CD8-positive, alpha-beta T cell (primary cell): ENCODE measurements at regions of chr13 and their contacts with region 1.

Region 1: GRCh38 chr13:95624020-95624419 is 20.5 kb downstream of the DZIP1 start:
- DNase-seq: peak in 3 of 9 experiments; percentile 13 to 64 (median 56)
- ATAC-seq: no peak
- H3K4me3 ChIP-seq: no peak overlapping the region
- H3K4me3 Mint-ChIP-seq: no peak overlapping the region
- H3K27ac ChIP-seq: no peak overlapping the region
- H3K27ac Mint-ChIP-seq: no peak overlapping the region
- H3K4me1 ChIP-seq: no peaks in the 10 kb centered on the region
- H3K4me1 Mint-ChIP-seq: no peaks in the 10 kb centered on the region
- H3K27me3 ChIP-seq: no peaks in the 10 kb centered on the region
- H3K27me3 Mint-ChIP-seq: peaks cover 14% of the 10 kb centered on the region
- CTCF ChIP-seq: peak; percentile 58

Region 2: DNA sequence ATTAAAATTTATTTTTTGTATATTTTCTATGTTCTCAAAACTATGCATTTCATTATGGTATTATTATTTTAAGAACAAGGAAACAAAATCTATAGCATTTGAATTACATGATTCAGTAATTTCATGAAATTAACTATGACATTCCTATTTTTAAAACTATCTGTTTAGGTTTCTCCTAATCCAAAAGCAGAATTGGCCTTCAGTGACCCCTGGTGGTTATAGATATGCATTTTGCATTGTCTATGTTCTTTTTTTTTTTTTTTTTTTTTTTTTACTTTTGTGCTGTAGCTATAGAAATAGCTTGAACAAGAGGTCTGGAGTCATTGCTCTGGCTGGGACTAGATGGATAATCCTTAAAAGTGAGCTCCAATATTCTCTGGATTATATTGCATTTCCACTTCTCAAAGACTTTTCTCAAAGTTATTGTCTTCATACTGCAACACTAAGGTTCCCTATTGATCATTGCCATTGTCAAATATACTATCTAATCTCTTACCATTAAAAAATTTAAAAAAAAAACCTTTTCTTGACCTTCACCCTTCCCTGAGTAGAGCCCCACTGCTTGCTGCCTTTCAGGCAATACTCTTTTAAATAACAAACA is 37.1 kb after region 1 on chr13:
- CTCF ChIA-PET with region 1: interaction called, 3 read pairs
- POLR2A ChIA-PET with region 1: no interaction called
- intact Hi-C with region 1: loop called in 1 of 2 experiments (anchors 1 kb)
- DNase-seq: peak in 2 of 9 experiments; percentile 44 to 52
- ATAC-seq: no peak
- H3K4me3 ChIP-seq: no peak overlapping the region
- H3K4me3 Mint-ChIP-seq: no peak overlapping the region
- H3K27ac ChIP-seq: no peak overlapping the region
- H3K27ac Mint-ChIP-seq: no peak overlapping the region
- H3K4me1 ChIP-seq: no peaks in the 10 kb centered on the region
- H3K4me1 Mint-ChIP-seq: no peaks in the 10 kb centered on the region
- H3K27me3 ChIP-seq: no peaks in the 10 kb centered on the region
- H3K27me3 Mint-ChIP-seq: peaks cover 15% of the 10 kb centered on the region
- CTCF ChIP-seq: peak; percentile 56

Region 3: DNA sequence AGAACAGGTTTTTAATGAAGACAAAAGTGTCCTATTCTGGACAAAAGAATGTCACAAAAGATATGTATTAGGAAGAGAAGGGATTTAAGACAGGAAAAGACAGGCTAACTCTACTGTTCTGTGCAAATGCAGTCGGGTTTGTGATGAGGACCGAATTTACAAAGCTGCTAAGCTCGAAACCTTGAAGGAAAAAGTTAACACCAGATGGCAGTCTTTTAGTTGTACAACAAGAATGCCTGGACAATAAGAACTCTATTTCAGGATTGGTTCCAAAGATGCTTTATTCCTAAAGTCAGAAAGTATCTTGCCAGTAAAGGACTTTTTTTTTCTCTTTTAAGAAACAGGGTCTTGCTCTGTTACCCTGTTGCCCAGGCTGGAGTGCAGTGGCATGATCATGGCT is 517.0 kb after region 1 on chr13:
- CTCF ChIA-PET with region 1: no interaction called
- POLR2A ChIA-PET with region 1: no interaction called
- intact Hi-C with region 1: no loop called
- DNase-seq: no peak
- ATAC-seq: no peak
- H3K4me3 ChIP-seq: no peak overlapping the region
- H3K4me3 Mint-ChIP-seq: no peak overlapping the region
- H3K27ac ChIP-seq: no peak overlapping the region
- H3K27ac Mint-ChIP-seq: no peak overlapping the region
- H3K4me1 ChIP-seq: no peaks in the 10 kb centered on the region
- H3K4me1 Mint-ChIP-seq: no peaks in the 10 kb centered on the region
- H3K27me3 ChIP-seq: no peaks in the 10 kb centered on the region
- H3K27me3 Mint-ChIP-seq: no peaks in the 10 kb centered on the region
- CTCF ChIP-seq: no peak

Region 4: GRCh38 chr13:96958286-96958891 is 1334.4 kb after region 1 on chr13:
- CTCF ChIA-PET with region 1: no interaction called
- POLR2A ChIA-PET with region 1: no interaction called
- intact Hi-C with region 1: loop called in 1 of 2 experiments (anchors 5 kb)
- DNase-seq: peak in 1 of 9 experiments; percentile 2
- ATAC-seq: no peak
- H3K4me3 ChIP-seq: no peak overlapping the region
- H3K4me3 Mint-ChIP-seq: no peak overlapping the region
- H3K27ac ChIP-seq: no peak overlapping the region
- H3K27ac Mint-ChIP-seq: no peak overlapping the region
- H3K4me1 ChIP-seq: no peaks in the 10 kb centered on the region
- H3K4me1 Mint-ChIP-seq: no peaks in the 10 kb centered on the region
- H3K27me3 ChIP-seq: no peaks in the 10 kb centered on the region
- H3K27me3 Mint-ChIP-seq: no peaks in the 10 kb centered on the region
- CTCF ChIP-seq: no peak

Region 5: GRCh38 chr13:97026531-97027161 is 1402.6 kb after region 1 on chr13:
- CTCF ChIA-PET with region 1: no interaction called
- POLR2A ChIA-PET with region 1: no interaction called
- intact Hi-C with region 1: loop called in 1 of 2 experiments (anchors 5 kb)
- DNase-seq: no peak
- ATAC-seq: no peak
- H3K4me3 ChIP-seq: no peak overlapping the region
- H3K4me3 Mint-ChIP-seq: no peak overlapping the region
- H3K27ac ChIP-seq: no peak overlapping the region
- H3K27ac Mint-ChIP-seq: no peak overlapping the region
- H3K4me1 ChIP-seq: no peaks in the 10 kb centered on the region
- H3K4me1 Mint-ChIP-seq: no peaks in the 10 kb centered on the region
- H3K27me3 ChIP-seq: no peaks in the 10 kb centered on the region
- H3K27me3 Mint-ChIP-seq: peaks cover 22% of the 10 kb centered on the region
- CTCF ChIP-seq: no peak